Esophagus muscularis mucosa (tissue), 4 donors: ENCODE measurements at regions of chr1 and their contacts with region 1.

Region 1: DNA sequence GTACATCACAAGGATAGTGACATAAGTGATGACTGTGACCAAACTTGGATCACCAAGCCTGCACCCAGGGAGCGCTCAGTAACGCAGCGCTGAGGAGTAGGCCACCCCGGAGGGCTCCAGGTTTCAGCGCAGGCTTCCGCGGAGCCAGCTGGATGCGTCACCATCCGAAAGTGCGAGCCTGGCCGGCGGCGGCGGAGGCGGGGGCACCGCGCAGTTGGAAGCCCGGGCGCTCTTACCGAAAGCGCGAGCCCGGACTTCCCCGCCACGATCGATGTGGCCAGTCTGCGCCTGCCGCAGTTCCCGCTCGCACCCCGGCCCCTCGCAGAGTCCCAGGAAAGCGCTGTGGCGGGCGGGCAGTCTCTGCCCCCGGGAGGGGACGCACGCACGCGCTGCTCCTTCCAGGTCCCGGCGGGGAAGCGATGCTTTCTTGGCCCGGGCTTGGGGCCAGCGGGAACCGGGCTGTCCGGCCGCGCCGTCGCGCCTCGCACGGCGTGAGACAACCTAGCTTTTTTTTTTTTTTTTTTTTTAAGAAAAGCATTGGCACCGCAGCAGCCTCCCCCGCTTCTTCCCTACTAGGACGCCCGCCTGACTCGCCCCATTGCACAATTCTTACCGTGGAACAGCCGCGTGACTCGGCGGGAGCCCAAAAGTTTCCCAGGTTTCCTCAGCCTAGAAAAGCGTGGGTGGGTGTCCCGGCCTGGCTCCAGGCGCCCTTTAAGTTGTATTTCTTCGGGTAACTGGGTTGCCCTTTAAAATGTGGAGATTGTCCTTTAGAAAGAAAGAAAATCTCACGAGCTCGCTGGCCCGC is 36.4 kb upstream of the JAK1 start:
- DNase-seq: peak; percentile 98
- H3K4me3 ChIP-seq: peak overlapping the region; percentile 65 to 82 (median 72)
- H3K27ac ChIP-seq: peak overlapping the region; percentile 92 to 98 (median 98)
- H3K4me1 ChIP-seq: peaks cover 10 to 26% (median 24%) of the 10 kb centered on the region in 4 donors
- H3K27me3 ChIP-seq: no peaks in the 10 kb centered on the region
- CTCF ChIP-seq: no peak
- EP300 ChIP-seq: no peak
- POLR2A ChIP-seq: no peak

Region 2: DNA sequence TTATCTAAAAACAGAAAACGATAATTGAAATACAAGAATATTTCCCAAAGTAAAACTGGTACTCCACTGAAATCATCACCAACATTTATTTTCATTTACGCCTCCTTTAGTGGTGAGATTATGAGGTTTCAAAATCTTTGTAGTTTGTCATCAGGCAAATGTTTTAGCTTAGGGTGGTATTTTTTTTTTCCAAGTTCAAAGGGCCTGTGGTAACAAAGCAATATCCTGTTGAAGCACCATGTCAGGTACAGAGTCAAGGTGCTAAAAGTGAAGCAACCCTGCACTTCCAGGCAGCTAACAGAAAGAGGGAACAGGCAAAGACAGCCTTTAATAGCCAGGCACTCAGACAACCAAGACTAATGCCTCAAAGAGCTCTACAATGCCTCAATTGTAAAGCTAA is 125.6 kb before region 1 on chr1:
- intact Hi-C with region 1: no loop called
- DNase-seq: no peak
- H3K4me3 ChIP-seq: no peak overlapping the region
- H3K27ac ChIP-seq: no peak overlapping the region
- H3K4me1 ChIP-seq: peaks cover 0 to 14% (median 0%) of the 10 kb centered on the region in 4 donors
- H3K27me3 ChIP-seq: no peaks in the 10 kb centered on the region
- CTCF ChIP-seq: no peak
- EP300 ChIP-seq: no peak
- POLR2A ChIP-seq: no peak

Region 3: GRCh38 chr1:65067491-65068201 is 64.9 kb after region 1 on chr1:
- intact Hi-C with region 1: loop called (anchors 5 kb)
- DNase-seq: peak; percentile 92
- H3K4me3 ChIP-seq: peak overlapping the region; percentile 83 to 95 (median 90)
- H3K27ac ChIP-seq: peak overlapping the region; percentile 98 to 100 (median 99)
- H3K4me1 ChIP-seq: peaks cover 21 to 45% (median 41%) of the 10 kb centered on the region in 4 donors
- H3K27me3 ChIP-seq: no peaks in the 10 kb centered on the region
- CTCF ChIP-seq: no peak
- EP300 ChIP-seq: no peak
- POLR2A ChIP-seq: peak; percentile 64